SK-N-SH (cell line): ENCODE measurements at regions of chr5 and their contacts with region 1.

Region 1: DNA sequence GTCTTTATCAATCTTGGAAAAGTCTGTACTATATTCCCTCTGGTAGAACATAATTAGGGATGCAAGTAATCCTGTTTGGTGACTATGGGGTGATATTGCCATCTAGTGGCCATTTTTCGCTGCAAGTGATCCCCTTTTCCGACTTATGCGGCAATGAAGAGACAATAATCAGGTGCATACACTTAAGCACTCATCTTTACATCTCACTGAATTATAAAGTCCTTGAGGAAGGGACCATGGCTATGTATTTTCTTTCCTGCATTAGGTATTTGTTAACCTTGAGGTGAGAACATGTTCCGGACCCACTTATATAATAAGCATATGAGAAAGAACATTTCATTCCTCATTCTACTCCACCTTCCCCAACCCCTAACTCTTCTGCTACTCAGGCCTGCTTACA is 19.6 kb upstream of the LIX1 start:
- DNase-seq: peak; percentile 45
- H3K4me3 ChIP-seq: no peak overlapping the region; a peak in 1 of 4 replicates
- H3K27ac ChIP-seq: no peak overlapping the region
- H3K4me1 ChIP-seq: no peaks in the 10 kb centered on the region
- H3K27me3 ChIP-seq: no peaks in the 10 kb centered on the region
- CTCF ChIP-seq: peak; percentile 96
- EP300 ChIP-seq: no peak
- RAD21 ChIP-seq: peak; percentile 89

Region 2: GRCh38 chr5:96614110-96614691 is 547.8 kb before region 1 on chr5:
- CTCF ChIA-PET with region 1: interaction called, 34 read pairs
- POLR2A ChIA-PET with region 1: no interaction called
- DNase-seq: peak; percentile 64
- H3K4me3 ChIP-seq: peak overlapping the region; percentile 10 to 58; a peak in 2 of 4 replicates
- H3K27ac ChIP-seq: peak overlapping the region; percentile 17 to 89; a peak in 3 of 4 replicates
- H3K4me1 ChIP-seq: peaks cover 0 to 16% of the 10 kb centered on the region in 2 experiments; a peak in 1 of 4 replicates
- H3K27me3 ChIP-seq: no peaks in the 10 kb centered on the region
- CTCF ChIP-seq: peak; percentile 71
- EP300 ChIP-seq: peak in 1 of 2 experiments; percentile 47; a peak in 1 of 4 replicates
- RAD21 ChIP-seq: peak; percentile 91

Region 3: DNA sequence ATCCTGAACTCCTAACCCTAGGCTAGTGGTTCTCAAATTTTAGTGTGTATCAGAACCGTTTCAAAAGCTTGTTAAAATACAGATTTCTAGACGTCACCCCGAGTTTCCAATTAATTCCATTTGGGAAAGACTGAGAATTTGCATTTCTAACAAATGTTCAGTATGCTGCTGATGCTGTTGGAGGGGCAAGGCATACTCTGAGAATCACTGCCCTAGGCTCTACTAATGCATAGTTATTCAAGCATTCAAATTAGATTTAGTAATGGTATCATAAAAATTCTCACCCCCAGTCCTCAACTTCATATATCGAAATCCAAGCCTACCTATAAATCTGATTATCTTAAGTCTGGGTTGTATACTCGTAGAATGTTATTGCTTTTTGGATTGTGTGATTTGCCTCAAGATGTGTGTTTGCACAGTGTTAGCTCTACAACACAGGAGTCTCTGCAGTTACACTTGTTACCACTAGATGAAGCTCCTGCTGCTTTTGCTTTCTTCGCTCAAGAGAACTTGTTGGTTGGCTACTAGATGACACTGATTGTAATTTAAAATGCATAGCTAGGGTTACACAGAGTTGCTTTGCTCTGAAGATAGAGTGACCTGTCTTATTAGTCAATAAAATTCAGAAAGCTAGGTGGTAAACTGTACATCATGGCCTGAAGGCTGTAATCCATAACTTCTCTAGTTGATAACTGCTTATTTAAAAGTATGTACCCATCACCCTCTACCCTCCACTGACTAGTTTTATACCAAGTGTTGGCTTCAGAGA is 293.3 kb before region 1 on chr5:
- CTCF ChIA-PET with region 1: interaction called, 80 read pairs
- POLR2A ChIA-PET with region 1: no interaction called
- DNase-seq: peak; percentile 32
- H3K4me3 ChIP-seq: no peak overlapping the region; a peak in 1 of 4 replicates
- H3K27ac ChIP-seq: no peak overlapping the region
- H3K4me1 ChIP-seq: no peaks in the 10 kb centered on the region
- H3K27me3 ChIP-seq: no peaks in the 10 kb centered on the region
- CTCF ChIP-seq: peak; percentile 91
- EP300 ChIP-seq: no peak
- RAD21 ChIP-seq: peak; percentile 88

Region 4: GRCh38 chr5:97142521-97143254 is 19.4 kb before region 1 on chr5 and contains the start of gene LIX1:
- CTCF ChIA-PET with region 1: interaction called, 37 read pairs
- POLR2A ChIA-PET with region 1: no interaction called
- DNase-seq: peak; percentile 68
- H3K4me3 ChIP-seq: no peak within 1 kb of the TSS
- H3K27ac ChIP-seq: no peak within 1 kb of the TSS
- H3K4me1 ChIP-seq: peaks cover 0 to 3% of the 10 kb centered on the region in 2 experiments; a peak in 2 of 4 replicates
- H3K27me3 ChIP-seq: no peaks in the 10 kb centered on the region
- CTCF ChIP-seq: peak; percentile 67
- EP300 ChIP-seq: peak in 1 of 2 experiments; percentile 56; a peak in 1 of 4 replicates
- RAD21 ChIP-seq: peak; percentile 88
- polyA plus RNA-seq, gene LIX1: 0.02 TPM in 1 of 2 replicates, not detected in the other

Region 5: GRCh38 chr5:97194366-97194765 is 32.3 kb after region 1 on chr5:
- CTCF ChIA-PET with region 1: no interaction called
- POLR2A ChIA-PET with region 1: no interaction called
- DNase-seq: no peak
- H3K4me3 ChIP-seq: no peak overlapping the region
- H3K27ac ChIP-seq: no peak overlapping the region
- H3K4me1 ChIP-seq: peaks cover 0 to 3% of the 10 kb centered on the region in 2 experiments; a peak in 1 of 4 replicates
- H3K27me3 ChIP-seq: no peaks in the 10 kb centered on the region
- CTCF ChIP-seq: no peak
- EP300 ChIP-seq: no peak
- RAD21 ChIP-seq: no peak

Region 6: GRCh38 chr5:97224112-97224750 is 62.2 kb after region 1 on chr5:
- CTCF ChIA-PET with region 1: no interaction called
- POLR2A ChIA-PET with region 1: no interaction called
- DNase-seq: no peak
- H3K4me3 ChIP-seq: no peak overlapping the region
- H3K27ac ChIP-seq: no peak overlapping the region
- H3K4me1 ChIP-seq: no peaks in the 10 kb centered on the region; a peak in 1 of 4 replicates
- H3K27me3 ChIP-seq: no peaks in the 10 kb centered on the region
- CTCF ChIP-seq: no peak
- EP300 ChIP-seq: no peak
- RAD21 ChIP-seq: no peak